ENCODE measurements at regions of chr17 and their contacts with region 1.

Region 1: GRCh38 chr17:45123930-45124796 is 8.2 kb downstream of the PLCD3 start:
- DNase-seq: peak in 4 of 5 donors; percentile 38 to 80 (median 54)
- ATAC-seq: peak in 3 of 4 donors; percentile 57 to 73 (median 72)
- H3K4me3 ChIP-seq: no peak overlapping the region
- H3K27ac ChIP-seq: peak overlapping the region in 10 of 12 donors; percentile 10 to 63 (median 36)
- H3K4me1 ChIP-seq: peaks cover 14 to 63% (median 45%) of the 10 kb centered on the region in 12 donors
- H3K27me3 ChIP-seq: no peaks in the 10 kb centered on the region
- CTCF ChIP-seq: no peak
- POLR2A ChIP-seq: no peak

Region 2: GRCh38 chr17:44775136-44775837 is 348.9 kb before region 1 on chr17:
- intact Hi-C with region 1: loop called in 2 of 10 experiments (anchors 10 kb)
- DNase-seq: peak in 4 of 5 donors; percentile 96 to 98 (median 96)
- ATAC-seq: peak; percentile 93 to 94 (median 94)
- H3K4me3 ChIP-seq: peak overlapping the region; percentile 31 to 74 (median 63)
- H3K27ac ChIP-seq: peak overlapping the region in 6 of 12 donors; percentile 7 to 82 (median 36)
- H3K4me1 ChIP-seq: peaks cover 0 to 30% (median 21%) of the 10 kb centered on the region in 12 donors
- H3K27me3 ChIP-seq: no peaks in the 10 kb centered on the region
- CTCF ChIP-seq: peak in 3 of 12 donors; percentile 3 to 38 (median 7)
- POLR2A ChIP-seq: no peak

Region 3: DNA sequence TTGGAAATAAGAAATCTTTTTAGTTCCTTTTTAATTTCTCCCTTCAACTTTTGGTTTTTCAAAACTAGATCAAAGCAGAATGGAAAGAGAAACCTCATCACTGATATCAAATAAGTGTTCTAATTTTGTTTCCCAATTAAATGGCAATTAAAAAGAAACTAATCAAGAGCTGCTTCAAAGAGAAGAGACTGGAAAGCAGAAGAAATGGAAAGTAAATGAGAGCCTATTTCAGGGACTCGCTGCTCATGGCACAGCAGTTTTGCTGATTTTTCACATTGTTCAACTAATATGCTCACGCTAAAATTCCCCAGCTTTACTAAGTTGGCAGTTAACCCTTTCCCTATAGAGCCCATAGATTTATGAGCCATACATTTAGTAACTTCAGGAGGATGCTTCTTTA is 56.5 kb before region 1 on chr17:
- intact Hi-C with region 1: loop called in 1 of 10 experiments (anchors 2 kb)
- DNase-seq: no peak
- ATAC-seq: no peak
- H3K4me3 ChIP-seq: no peak overlapping the region
- H3K27ac ChIP-seq: peak overlapping the region in 1 of 12 donors; percentile 49
- H3K4me1 ChIP-seq: peaks cover 0 to 58% (median 26%) of the 10 kb centered on the region in 12 donors
- H3K27me3 ChIP-seq: no peaks in the 10 kb centered on the region
- CTCF ChIP-seq: no peak
- POLR2A ChIP-seq: no peak

Region 4: DNA sequence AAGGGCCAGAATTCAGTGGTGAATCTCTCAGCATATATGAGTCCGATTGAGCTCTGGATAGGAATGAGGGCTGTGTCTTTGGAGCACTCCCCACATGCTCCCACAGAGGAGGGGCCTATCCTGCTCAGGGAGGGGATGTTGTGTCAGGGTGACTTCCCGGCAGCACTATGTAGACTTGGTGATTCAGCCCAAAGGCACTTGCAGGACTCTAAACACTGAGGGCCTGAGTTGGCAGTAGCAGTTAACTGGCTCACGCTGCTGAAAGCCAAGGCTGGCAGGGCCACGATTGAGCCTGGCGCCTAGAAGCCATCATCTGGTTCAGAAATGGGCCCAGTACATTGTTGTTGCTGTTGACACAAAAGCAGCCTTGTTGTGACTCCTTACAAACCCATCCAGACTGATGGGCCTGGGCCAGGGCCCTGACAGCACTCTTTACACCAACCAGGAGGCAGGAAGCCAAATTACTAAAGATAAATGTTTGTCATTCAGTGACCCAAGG is 31.2 kb before region 1 on chr17:
- intact Hi-C with region 1: loop called in 1 of 10 experiments (anchors 2 kb)
- DNase-seq: peak; percentile 79 to 91 (median 82)
- ATAC-seq: peak; percentile 94 to 97 (median 96)
- H3K4me3 ChIP-seq: no peak overlapping the region
- H3K27ac ChIP-seq: peak overlapping the region; percentile 70 to 97 (median 88)
- H3K4me1 ChIP-seq: peaks cover 12 to 41% (median 26%) of the 10 kb centered on the region in 12 donors
- H3K27me3 ChIP-seq: no peaks in the 10 kb centered on the region
- CTCF ChIP-seq: no peak
- POLR2A ChIP-seq: no peak

Measured in heart left ventricle (tissue), 16 donors.